CD8-positive, alpha-beta T cell (primary cell): ENCODE measurements at regions of chr10 and their contacts with region 1.

Region 1: GRCh38 chr10:75012471-75012870 is 99.0 kb upstream of the SAMD8 start:
- DNase-seq: no peak
- ATAC-seq: no peak
- H3K4me3 ChIP-seq: no peak overlapping the region
- H3K4me3 Mint-ChIP-seq: peak overlapping the region; percentile 0
- H3K27ac ChIP-seq: peak overlapping the region in 1 of 2 experiments; percentile 68
- H3K27ac Mint-ChIP-seq: peak overlapping the region; percentile 78
- H3K4me1 ChIP-seq: peaks cover 39% of the 10 kb centered on the region
- H3K4me1 Mint-ChIP-seq: peaks cover 59% of the 10 kb centered on the region
- H3K27me3 ChIP-seq: no peaks in the 10 kb centered on the region
- H3K27me3 Mint-ChIP-seq: no peaks in the 10 kb centered on the region
- CTCF ChIP-seq: no peak

Region 2: DNA sequence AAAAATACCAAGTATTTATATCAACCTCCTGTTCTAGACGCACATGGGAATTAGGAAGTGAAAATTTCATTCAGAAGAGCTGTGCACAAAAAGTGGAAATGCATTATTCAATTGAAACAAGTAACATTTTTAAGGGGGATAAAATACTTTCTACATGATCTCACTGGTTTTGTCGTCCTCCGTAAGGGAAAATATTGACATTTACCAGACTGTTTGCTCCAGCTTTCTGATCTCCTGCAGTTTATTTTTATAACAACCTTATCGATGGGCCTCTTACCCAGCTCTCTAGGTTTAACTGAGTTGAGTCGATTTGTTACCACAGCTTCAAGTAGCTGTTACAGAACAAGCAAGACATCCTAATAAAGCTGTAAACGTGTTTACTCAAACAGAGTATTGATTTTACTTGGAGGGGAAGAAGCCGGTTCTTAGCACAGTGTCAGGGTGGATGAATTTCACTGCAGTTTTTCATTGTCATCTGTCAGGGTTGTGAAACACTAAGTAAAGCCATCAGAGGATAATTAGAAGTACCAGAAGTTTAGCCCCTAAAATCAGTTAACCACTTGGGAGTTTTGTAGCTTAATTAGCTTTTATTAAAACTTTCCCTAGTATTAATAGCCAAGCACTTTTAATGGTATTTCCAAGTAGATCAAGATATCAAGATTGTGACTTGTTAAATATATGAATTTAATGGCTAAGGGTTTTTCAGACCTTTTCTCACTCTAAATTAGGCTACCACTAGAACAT is 328.7 kb before region 1 on chr10:
- CTCF ChIA-PET with region 1: no interaction called
- POLR2A ChIA-PET with region 1: no interaction called
- intact Hi-C with region 1: no loop called
- DNase-seq: no peak
- ATAC-seq: no peak
- H3K4me3 ChIP-seq: no peak overlapping the region
- H3K4me3 Mint-ChIP-seq: no peak overlapping the region
- H3K27ac ChIP-seq: no peak overlapping the region
- H3K27ac Mint-ChIP-seq: no peak overlapping the region
- H3K4me1 ChIP-seq: no peaks in the 10 kb centered on the region
- H3K4me1 Mint-ChIP-seq: peaks cover 18% of the 10 kb centered on the region
- H3K27me3 ChIP-seq: no peaks in the 10 kb centered on the region
- H3K27me3 Mint-ChIP-seq: no peaks in the 10 kb centered on the region
- CTCF ChIP-seq: no peak

Region 3: GRCh38 chr10:74967911-74968645 is 44.4 kb before region 1 on chr10:
- CTCF ChIA-PET with region 1: no interaction called
- POLR2A ChIA-PET with region 1: no interaction called
- intact Hi-C with region 1: loop called in 1 of 2 experiments (anchors 1 kb)
- DNase-seq: peak in 3 of 9 experiments; percentile 21 to 56 (median 32)
- ATAC-seq: peak; percentile 77
- H3K4me3 ChIP-seq: peak overlapping the region in 1 of 2 experiments; percentile 5
- H3K4me3 Mint-ChIP-seq: peak overlapping the region; percentile 76
- H3K27ac ChIP-seq: peak overlapping the region; percentile 48 to 71
- H3K27ac Mint-ChIP-seq: peak overlapping the region; percentile 96
- H3K4me1 ChIP-seq: peaks cover 32% of the 10 kb centered on the region
- H3K4me1 Mint-ChIP-seq: peaks cover 41% of the 10 kb centered on the region
- H3K27me3 ChIP-seq: no peaks in the 10 kb centered on the region
- H3K27me3 Mint-ChIP-seq: no peaks in the 10 kb centered on the region
- CTCF ChIP-seq: no peak